Ascending aorta (tissue), 2 donors: ENCODE measurements at regions of chr22 and their contacts with region 1.

Region 1: GRCh38 chr22:17501679-17502285 is 61.5 kb upstream of the SLC25A18 start:
- DNase-seq: no peak
- H3K4me3 ChIP-seq: no peak overlapping the region
- H3K27ac ChIP-seq: no peak overlapping the region
- H3K4me1 ChIP-seq: no peaks in the 10 kb centered on the region
- H3K27me3 ChIP-seq: no peaks in the 10 kb centered on the region
- CTCF ChIP-seq: peak; percentile 48 to 62 (median 53)

Region 2: GRCh38 chr22:17074648-17075002 is 427.2 kb before region 1 on chr22:
- intact Hi-C with region 1: loop called (anchors 2 kb)
- DNase-seq: no peak
- H3K4me3 ChIP-seq: no peak overlapping the region
- H3K27ac ChIP-seq: no peak overlapping the region
- H3K4me1 ChIP-seq: no peaks in the 10 kb centered on the region
- H3K27me3 ChIP-seq: no peaks in the 10 kb centered on the region
- CTCF ChIP-seq: no peak

Region 3: GRCh38 chr22:17339095-17339693 is 162.6 kb before region 1 on chr22:
- intact Hi-C with region 1: no loop called
- DNase-seq: no peak
- H3K4me3 ChIP-seq: no peak overlapping the region
- H3K27ac ChIP-seq: no peak overlapping the region
- H3K4me1 ChIP-seq: no peaks in the 10 kb centered on the region
- H3K27me3 ChIP-seq: no peaks in the 10 kb centered on the region
- CTCF ChIP-seq: no peak

Region 4: GRCh38 chr22:17552737-17553136 is 51.0 kb after region 1 on chr22:
- intact Hi-C with region 1: no loop called
- DNase-seq: no peak
- H3K4me3 ChIP-seq: no peak overlapping the region
- H3K27ac ChIP-seq: no peak overlapping the region
- H3K4me1 ChIP-seq: no peaks in the 10 kb centered on the region
- H3K27me3 ChIP-seq: no peaks in the 10 kb centered on the region
- CTCF ChIP-seq: no peak